HepG2 (cell line): ENCODE measurements at regions of chr2 and their contacts with region 1.

Region 1: GRCh38 chr2:131801210-131801744 is 273.6 kb downstream of the CCDC74A start:
- DNase-seq: no peak
- ATAC-seq: peak; percentile 27
- H3K4me3 ChIP-seq: no peak overlapping the region; a peak in 1 of 6 replicates
- H3K27ac ChIP-seq: no peak overlapping the region
- H3K4me1 ChIP-seq: peaks cover 6% of the 10 kb centered on the region; the same call in 1 of the 2 replicates
- H3K27me3 ChIP-seq: no peaks in the 10 kb centered on the region; a peak in 1 of 5 replicates
- CTCF ChIP-seq: no peak
- EP300 ChIP-seq: no peak
- POLR2A ChIP-seq: no peak
- RAD21 ChIP-seq: no peak

Region 2: GRCh38 chr2:131154071-131154531 is 647.2 kb before region 1 on chr2:
- CTCF ChIA-PET with region 1: interaction called, 3 read pairs
- POLR2A ChIA-PET with region 1: no interaction called
- in situ Hi-C with region 1: no loop called
- intact Hi-C with region 1: loop called (anchors 10 kb)
- DNase-seq: peak; percentile 70
- ATAC-seq: peak; percentile 85
- H3K4me3 ChIP-seq: no peak overlapping the region
- H3K27ac ChIP-seq: no peak overlapping the region
- H3K4me1 ChIP-seq: peaks cover 33% of the 10 kb centered on the region
- H3K27me3 ChIP-seq: peaks cover 0 to 26% of the 10 kb centered on the region in 2 experiments; a peak in 3 of 5 replicates
- CTCF ChIP-seq: peak; percentile 99
- EP300 ChIP-seq: no peak
- POLR2A ChIP-seq: no peak
- RAD21 ChIP-seq: peak; percentile 96

Region 3: DNA sequence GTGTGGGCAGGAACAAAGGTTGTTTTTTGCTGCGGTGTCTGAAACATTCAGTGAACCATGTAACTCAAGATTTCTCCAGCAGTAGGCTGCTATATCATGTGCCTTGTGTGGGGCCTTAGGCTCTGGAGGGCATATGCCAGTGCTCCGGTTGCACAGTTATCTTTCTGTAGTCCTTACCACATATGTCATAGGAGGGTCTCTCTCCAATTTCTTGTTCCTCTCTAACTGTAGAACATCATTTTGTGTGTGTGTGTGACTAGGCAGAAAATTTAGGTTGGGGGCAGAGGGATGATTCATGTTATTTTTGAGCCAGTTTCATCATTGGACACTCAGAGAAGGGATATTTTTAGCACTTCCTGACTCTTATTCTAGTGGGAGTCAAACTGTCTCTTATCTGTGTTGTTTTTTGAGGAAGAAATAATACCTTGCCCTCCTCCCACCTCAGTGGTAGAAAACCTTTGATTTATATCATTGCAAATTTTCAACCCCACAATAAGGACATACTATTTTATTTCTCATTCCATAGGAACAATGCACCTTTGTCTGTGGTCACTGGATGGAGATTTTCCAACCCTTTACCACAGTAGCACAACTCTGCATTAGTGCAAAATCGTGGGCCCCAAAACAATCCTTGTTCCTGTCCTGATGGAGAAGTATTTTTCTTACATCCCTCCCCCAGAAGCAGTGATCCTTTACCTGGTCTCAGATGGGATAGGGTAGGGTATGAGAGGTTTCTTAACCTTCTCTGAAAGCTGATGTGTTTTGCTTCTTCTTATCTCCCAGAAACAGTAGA is 159.7 kb before region 1 on chr2:
- CTCF ChIA-PET with region 1: no interaction called
- POLR2A ChIA-PET with region 1: no interaction called
- in situ Hi-C with region 1: no loop called
- intact Hi-C with region 1: no loop called
- DNase-seq: no peak
- ATAC-seq: no peak
- H3K4me3 ChIP-seq: no peak overlapping the region
- H3K27ac ChIP-seq: no peak overlapping the region
- H3K4me1 ChIP-seq: no peaks in the 10 kb centered on the region
- H3K27me3 ChIP-seq: peaks cover 0 to 7% of the 10 kb centered on the region in 2 experiments; a peak in 2 of 5 replicates
- CTCF ChIP-seq: no peak
- EP300 ChIP-seq: no peak
- POLR2A ChIP-seq: no peak
- RAD21 ChIP-seq: no peak

Region 4: GRCh38 chr2:131682122-131682944 is 118.9 kb before region 1 on chr2:
- CTCF ChIA-PET with region 1: interaction called, 5 read pairs
- POLR2A ChIA-PET with region 1: interaction called, 3 read pairs
- in situ Hi-C with region 1: no loop called
- intact Hi-C with region 1: loop called (anchors 1 kb)
- DNase-seq: peak; percentile 80
- ATAC-seq: peak; percentile 98
- H3K4me3 ChIP-seq: peak overlapping the region; percentile 66 to 91 (median 69)
- H3K27ac ChIP-seq: peak overlapping the region; percentile 53
- H3K4me1 ChIP-seq: peaks cover 43% of the 10 kb centered on the region
- H3K27me3 ChIP-seq: no peaks in the 10 kb centered on the region; a peak in 1 of 5 replicates
- CTCF ChIP-seq: peak; percentile 82
- EP300 ChIP-seq: 0 out of 4 replicates have a peak, but pooled peaks of 1 of the 2 experiments have one; percentile 36
- POLR2A ChIP-seq: peak; percentile 86 to 99
- RAD21 ChIP-seq: no peak